Mammary epithelial cell (primary cell): ENCODE measurements at regions of chr2 and their contacts with region 1.

Region 1: DNA sequence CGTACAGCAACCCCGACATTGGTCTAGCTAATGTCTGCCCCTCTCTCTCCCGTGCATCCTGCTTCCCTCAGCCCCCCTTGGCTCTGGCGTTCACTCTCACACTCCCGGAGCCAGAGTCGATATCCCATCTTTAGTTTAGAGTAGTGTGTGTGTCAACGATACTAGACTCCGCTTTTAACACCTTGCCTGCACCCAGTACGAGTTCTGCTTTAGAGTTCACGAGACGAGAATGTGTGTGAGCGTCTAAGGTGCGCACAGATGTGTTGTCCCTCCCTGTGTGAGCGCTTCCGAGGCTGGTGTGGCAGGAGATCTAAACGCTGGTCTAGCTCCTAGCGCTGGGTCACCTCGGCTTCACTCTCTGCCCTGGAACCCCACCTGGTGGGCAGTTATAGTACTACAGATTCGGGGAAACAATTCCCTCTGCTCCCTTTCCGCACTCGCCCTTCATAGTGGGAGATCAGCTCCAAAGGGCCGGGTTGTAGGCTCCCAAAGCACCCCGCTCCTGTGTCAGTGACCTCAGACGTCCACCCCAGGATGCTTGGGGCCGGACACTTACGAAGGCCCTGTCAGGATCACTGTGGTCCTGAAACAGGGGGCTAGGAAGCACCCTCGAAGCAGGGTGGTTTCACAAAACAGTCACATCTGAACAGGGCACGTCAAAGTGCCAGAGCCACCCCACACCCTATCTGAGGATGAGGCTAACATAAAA is 2.6 kb upstream of the CYP26B1 start:
- DNase-seq: peak; percentile 65
- H3K4me3 ChIP-seq: peak overlapping the region in 2 of 3 experiments; percentile 23 to 28
- H3K27ac ChIP-seq: no peak overlapping the region
- H3K4me1 ChIP-seq: peaks cover 32% of the 10 kb centered on the region
- H3K27me3 ChIP-seq: peaks cover 22% of the 10 kb centered on the region
- CTCF ChIP-seq: peak; percentile 66 to 84

Region 2: DNA sequence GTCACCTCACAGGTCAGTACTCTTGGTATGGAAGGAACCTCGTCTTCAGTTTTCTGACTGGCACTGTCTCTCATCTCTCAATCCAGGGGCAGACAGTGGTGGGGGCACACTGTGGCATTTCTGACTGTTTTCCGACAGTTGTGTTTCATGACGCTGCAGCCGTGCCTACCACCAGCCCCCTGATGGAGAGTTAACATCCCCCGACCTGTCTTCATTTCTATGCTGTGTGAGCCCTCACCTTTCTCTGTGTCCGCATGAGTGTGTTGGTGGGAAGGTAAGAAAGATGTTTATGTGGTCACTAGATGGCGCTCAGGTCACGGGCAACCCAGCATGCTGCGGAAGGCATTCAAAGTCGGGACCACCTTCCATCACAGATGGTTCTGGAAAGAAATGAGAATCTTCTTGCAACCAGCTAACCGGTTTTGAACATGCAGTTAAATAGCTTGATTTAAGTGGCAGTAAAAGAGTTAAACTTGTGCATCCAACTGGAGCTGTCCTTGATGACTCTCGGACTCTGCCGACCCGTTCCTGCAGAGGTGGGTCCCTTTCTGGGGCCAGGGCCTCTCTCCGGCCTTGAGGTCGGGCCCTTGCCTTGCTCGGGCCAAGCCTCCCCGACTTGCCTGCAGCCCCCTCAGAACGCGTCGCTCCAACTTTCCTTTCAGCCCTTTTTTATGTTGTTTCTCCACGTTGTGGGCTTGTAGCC is 604.6 kb before region 1 on chr2:
- CTCF ChIA-PET with region 1: interaction called, 5 read pairs
- dilution Hi-C with region 1: no loop called
- in situ Hi-C with region 1: loop called in 1 of 2 experiments (anchors 10 kb)
- intact Hi-C with region 1: loop called (anchors 1 kb)
- DNase-seq: peak; percentile 30
- H3K4me3 ChIP-seq: no peak overlapping the region
- H3K27ac ChIP-seq: no peak overlapping the region
- H3K4me1 ChIP-seq: peaks cover 4% of the 10 kb centered on the region
- H3K27me3 ChIP-seq: no peaks in the 10 kb centered on the region
- CTCF ChIP-seq: peak; percentile 71 to 87

Region 3: DNA sequence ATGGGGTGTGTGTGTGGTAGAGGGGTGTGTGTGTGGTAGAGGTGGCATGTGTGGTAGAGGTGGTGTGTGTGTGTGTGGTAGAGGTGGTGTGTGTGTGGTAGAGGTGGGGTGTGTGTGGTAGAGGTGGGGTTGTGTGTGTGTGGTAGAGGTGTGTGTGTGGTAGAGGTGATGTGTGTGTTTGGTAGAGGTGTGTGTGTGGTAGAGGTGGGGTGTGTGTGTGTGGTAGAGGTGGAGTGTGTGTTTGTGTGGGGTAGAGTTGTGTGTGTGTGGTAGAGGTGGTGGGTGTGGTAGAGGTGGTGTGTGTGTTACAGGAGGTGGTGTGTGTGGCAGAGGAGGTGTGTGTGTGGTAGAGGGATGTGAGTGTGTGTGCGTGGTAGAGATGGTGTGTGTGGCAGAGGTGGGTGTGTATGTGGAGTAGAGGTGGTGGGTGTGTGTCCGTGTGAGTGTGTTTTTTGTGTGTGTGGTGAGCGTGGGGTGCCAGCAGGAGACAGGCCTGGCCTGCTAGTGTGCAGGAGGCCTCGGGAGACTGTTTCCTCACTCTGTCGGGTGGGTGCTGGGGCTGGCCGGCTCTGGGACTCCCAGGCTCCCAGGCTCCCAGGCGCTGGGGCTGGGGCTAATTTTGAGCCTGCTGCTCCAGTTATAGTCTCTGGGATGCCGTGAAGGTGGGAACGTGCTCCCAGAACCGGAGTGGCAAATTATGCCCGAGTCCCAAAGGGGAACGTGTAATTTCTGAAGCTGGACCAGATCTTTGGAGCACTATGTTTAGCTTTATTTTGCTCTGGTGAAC is 531.8 kb before region 1 on chr2:
- CTCF ChIA-PET with region 1: no interaction called
- dilution Hi-C with region 1: no loop called
- in situ Hi-C with region 1: no loop called
- intact Hi-C with region 1: no loop called
- DNase-seq: no peak
- H3K4me3 ChIP-seq: no peak overlapping the region
- H3K27ac ChIP-seq: no peak overlapping the region
- H3K4me1 ChIP-seq: no peaks in the 10 kb centered on the region
- H3K27me3 ChIP-seq: no peaks in the 10 kb centered on the region
- CTCF ChIP-seq: no peak

Region 4: DNA sequence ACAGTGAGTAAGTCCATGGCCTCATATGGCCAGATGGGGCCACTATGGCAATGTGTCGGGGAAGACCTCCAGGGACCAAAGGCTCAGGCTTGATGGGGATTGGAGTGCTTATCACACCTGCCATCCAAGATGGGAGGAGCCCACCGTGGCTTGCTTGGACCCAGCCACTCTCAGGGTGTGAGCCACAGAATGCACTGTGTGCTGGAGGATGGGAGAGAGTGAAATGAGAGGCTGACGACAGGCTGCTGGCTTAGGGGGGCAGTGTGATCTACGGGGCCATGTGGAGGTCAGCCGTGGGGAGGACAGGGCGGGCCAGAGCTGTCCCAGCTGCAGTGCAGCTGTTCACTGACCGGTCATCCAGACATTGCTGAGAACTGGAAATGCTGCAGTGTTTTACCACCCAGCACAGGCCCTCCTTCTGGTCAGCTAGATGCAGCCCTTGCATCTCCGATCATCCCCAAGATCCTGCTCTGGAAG is 342.3 kb before region 1 on chr2:
- CTCF ChIA-PET with region 1: no interaction called
- dilution Hi-C with region 1: no loop called
- in situ Hi-C with region 1: loop called (anchors 5 to 10 kb)
- intact Hi-C with region 1: no loop called
- DNase-seq: no peak
- H3K4me3 ChIP-seq: no peak overlapping the region
- H3K27ac ChIP-seq: no peak overlapping the region
- H3K4me1 ChIP-seq: no peaks in the 10 kb centered on the region
- H3K27me3 ChIP-seq: no peaks in the 10 kb centered on the region
- CTCF ChIP-seq: no peak

Region 5: DNA sequence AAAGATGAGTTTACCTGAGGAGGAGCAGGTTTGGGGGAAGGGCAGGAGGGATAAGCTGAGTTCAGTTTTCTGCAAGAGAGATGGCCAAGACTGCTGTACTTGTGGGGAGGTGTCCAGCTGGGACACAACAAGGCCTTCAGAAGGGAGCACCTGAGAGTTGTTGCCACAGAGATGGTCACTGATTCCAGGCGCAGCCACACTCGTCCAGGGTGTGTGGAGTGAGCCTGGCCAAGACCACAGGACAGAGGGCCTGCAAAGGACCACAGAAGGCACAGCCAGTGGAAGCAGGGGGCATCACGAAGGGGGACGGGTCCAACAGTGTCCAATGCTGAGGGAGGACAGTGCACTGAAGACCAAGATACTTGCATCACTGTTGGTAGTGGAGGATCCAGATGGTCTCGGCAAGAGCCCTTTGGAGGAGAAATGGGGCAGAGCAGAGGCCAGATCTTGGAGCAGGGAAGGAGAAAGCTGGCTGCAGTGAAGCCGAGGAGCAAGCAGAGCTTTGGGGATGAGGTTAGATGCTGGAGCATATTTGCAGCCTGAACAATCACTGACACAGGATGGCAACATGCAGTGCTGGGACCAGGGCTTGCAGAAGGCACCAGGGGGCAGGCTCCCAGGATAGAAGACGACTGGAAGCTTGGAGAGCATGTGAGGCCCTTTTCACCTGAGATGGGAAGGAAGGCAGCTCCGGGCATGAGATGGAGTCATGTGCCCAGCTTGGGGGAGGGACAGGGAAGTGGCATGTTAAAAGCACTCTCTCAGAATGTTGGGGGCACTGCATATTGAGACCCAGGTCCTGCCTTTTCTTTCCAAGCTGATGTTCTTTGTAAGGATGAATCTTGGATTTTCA is 216.6 kb before region 1 on chr2:
- CTCF ChIA-PET with region 1: interaction called, 7 read pairs
- dilution Hi-C with region 1: loop called (anchors 25 kb)
- in situ Hi-C with region 1: loop called in 1 of 2 experiments (anchors 5 kb)
- intact Hi-C with region 1: loop called (anchors 1 kb)
- DNase-seq: peak; percentile 15
- H3K4me3 ChIP-seq: no peak overlapping the region
- H3K27ac ChIP-seq: no peak overlapping the region
- H3K4me1 ChIP-seq: no peaks in the 10 kb centered on the region
- H3K27me3 ChIP-seq: no peaks in the 10 kb centered on the region
- CTCF ChIP-seq: peak; percentile 26 to 44

Region 6: DNA sequence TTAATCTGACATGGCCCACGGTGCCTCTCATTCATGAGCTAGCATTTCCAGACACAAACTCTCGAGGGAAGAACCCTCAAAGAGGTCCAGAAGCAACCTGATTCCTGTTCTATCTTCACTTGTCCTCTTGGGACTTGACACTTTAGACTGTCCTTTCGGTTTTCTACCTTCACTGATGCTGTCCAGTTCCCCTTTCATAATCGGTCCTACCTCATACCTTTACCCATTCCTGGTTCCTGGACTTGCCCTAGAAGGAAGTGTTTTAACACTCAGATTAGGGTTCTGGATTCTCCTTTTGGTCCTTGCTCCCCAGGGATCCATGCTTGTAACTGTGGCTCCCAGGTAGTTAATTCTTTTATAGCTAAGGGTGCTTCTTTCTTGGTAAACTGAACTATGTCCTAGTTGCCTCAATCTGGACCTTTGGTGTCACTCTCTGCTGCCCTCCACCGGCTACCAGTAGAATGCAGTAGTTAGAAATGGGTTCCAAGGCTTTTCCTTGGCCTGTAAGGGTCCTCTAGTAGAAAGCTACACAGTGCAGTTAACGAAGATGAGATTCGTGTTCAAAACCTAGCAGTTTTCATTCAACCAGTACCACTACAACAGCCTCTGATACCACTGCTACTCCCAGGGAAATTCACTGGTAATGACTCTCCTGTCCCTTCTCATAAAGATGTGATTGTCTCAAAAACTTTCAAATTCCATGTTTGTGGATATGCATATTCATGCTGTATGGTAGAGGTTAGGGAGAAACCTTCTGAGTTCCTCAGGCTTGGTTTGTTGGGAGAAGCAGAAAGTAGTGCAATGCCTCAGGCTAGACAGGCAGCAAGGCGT is 175.5 kb after region 1 on chr2:
- CTCF ChIA-PET with region 1: no interaction called
- dilution Hi-C with region 1: no loop called
- in situ Hi-C with region 1: no loop called
- intact Hi-C with region 1: loop called (anchors 2 kb)
- DNase-seq: no peak
- H3K4me3 ChIP-seq: no peak overlapping the region
- H3K27ac ChIP-seq: no peak overlapping the region
- H3K4me1 ChIP-seq: no peaks in the 10 kb centered on the region
- H3K27me3 ChIP-seq: no peaks in the 10 kb centered on the region
- CTCF ChIP-seq: peak; percentile 75 to 80

Region 7: DNA sequence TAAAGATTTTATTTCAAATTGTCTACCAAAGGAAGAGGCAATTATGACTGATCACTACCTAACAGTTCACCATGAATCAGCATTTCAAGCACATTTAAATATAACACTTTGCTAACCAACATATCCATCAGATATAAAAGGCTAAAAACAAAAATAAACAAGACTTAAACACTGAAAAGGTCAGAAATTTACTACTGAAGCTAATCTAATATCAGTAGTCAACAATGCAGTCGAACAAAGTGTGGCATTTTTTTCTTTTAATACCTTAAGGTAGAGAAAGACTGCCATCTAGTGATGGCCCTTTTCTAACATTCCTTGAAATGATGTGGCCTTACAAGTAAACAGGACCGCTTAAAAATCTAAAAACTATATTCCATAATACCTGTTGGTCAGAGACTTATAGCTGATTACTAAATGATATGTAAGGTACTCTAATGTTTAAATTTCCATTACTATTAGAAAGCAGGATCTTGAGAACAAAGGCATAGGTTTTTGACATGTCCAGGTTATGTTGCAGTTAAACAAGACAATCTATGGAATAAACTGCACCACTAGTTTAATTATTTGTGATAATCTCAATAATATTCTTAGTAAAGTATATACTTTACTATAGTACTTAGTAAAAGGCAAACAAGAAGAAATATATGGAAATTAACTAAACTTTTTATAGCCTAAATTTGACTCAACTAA is 595.5 kb after region 1 on chr2:
- CTCF ChIA-PET with region 1: no interaction called
- dilution Hi-C with region 1: no loop called
- in situ Hi-C with region 1: no loop called
- intact Hi-C with region 1: loop called (anchors 2 kb)
- DNase-seq: peak; percentile 46
- H3K4me3 ChIP-seq: no peak overlapping the region
- H3K27ac ChIP-seq: no peak overlapping the region
- H3K4me1 ChIP-seq: peaks cover 6% of the 10 kb centered on the region
- H3K27me3 ChIP-seq: no peaks in the 10 kb centered on the region
- CTCF ChIP-seq: peak; percentile 68 to 76